IMR-90 (cell line): ENCODE measurements at regions of chr17 and their contacts with region 1.

Region 1: DNA sequence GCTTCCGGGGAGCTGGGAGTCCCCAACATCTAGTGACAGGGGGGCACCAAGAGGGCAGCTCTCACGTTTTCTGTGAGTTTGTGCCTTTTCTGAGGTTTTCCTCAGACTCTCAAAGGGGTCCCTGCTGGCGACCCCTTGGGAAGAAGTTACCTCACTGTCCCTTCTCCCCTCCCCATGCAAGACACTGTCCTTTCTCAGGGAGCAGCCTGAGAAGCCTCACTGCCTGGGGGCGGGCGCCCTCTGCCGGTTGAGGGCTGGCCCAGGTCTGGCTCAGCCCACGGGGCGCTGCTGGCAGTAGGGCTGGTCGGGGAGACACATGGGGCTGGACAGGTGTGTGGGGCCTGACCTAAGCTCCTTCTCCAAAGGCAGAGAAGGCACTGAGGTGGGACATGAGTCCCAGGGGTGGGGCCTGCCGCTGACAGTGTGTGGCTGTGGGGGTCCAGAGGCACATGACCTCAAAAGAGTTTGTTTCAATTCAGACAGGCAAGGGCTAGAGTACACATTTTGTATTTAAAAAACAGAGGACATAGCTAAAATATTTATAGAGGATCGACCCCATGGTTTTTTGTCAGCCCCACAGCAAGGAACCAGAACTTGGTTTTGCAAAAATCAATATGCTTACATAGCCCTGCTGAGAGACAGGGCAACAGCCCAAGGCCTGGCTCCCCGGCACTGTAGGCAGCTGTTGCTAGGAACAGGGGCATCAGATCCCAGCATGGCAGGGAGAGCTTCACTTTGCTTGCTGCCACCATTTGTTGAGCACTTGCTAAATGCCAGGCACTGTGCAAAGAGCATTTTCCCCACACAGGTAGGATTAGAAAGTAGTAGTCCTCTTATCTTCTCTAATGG is 18.5 kb upstream of the ALDH3A1 start:
- DNase-seq: peak; percentile 41
- ATAC-seq: peak; percentile 89
- H3K4me3 ChIP-seq: no peak overlapping the region
- H3K27ac ChIP-seq: no peak overlapping the region
- H3K4me1 ChIP-seq: peaks cover 3% of the 10 kb centered on the region
- H3K27me3 ChIP-seq: peaks cover 13% of the 10 kb centered on the region
- CTCF ChIP-seq: peak; percentile 89
- POLR2A ChIP-seq: no peak
- RAD21 ChIP-seq: peak; percentile 92

Region 2: DNA sequence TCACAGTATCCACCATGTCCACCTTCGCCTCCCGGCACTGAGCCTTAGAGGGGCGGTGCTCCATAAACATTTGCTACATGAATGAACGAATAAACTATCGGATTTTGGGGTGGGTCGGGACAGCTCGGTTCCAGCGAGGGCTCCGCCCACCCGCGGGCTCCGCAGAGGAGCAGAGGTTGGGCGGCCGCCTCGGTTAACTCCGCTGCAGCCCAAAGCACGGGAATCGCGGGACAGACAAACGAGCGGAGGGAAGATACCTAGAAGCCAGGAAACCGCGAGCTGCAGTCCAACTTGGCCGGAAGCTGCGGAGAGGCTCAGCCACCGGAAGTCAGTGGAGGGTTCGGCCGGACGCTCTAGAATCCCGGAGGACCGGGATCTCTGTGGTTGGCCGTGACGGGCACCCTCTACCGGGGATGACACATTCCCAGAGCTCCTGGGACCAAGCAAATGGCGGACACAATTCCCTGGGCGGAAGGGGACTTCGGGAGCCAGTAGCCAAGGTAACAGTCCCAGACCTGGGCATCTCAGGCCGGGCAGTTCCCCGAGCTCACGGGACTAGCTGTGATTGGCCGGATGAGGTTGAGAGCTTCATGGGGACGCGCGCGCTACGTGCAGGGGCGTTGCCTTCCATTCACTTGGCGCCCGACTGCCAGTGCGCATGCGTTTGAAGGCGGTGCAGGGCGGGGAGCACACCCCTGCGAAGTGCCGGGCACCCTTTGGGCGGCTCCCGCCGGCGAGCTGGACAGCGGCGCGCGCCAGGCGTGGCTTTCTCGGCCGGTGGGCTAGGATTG is 388.8 kb before region 1 on chr17:
- CTCF ChIA-PET with region 1: no interaction called
- POLR2A ChIA-PET with region 1: no interaction called
- dilution Hi-C with region 1: no loop called
- in situ Hi-C with region 1: no loop called
- intact Hi-C with region 1: loop called (anchors 5 kb)
- DNase-seq: peak; percentile 99
- ATAC-seq: peak; percentile 95
- H3K4me3 ChIP-seq: peak overlapping the region; percentile 66
- H3K27ac ChIP-seq: peak overlapping the region; percentile 90
- H3K4me1 ChIP-seq: peaks cover 12% of the 10 kb centered on the region; the same call in 1 of the 2 replicates
- H3K27me3 ChIP-seq: no peaks in the 10 kb centered on the region
- CTCF ChIP-seq: no peak
- POLR2A ChIP-seq: peak; percentile 91
- RAD21 ChIP-seq: no peak

Region 3: DNA sequence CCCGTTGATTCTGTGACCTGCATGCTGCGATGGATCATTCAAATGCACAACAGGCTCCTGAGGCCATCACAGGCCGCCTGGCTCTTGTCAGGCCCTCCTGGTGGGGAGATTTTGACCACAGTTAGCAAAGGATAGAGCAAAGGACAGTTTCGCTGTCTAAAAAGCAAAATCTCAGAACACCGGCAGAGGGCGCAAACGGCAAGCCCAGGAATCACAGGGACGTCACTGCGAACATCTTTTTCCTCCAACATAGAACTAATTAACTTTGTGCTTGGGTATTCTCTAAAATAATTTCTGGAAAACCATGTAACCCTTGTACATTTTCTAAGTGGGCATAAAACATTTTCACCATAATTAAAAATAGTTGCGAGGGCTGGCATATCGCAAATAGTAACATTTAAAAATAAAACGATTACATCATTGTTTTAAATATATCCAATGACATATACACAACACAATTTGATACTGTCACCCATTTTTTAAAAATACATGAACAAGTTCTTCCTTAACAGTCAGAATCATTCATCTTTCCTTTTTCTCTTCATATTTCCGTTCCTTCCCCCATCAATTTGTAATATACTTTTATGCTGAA is 252.7 kb before region 1 on chr17:
- CTCF ChIA-PET with region 1: interaction called, 5 read pairs
- POLR2A ChIA-PET with region 1: no interaction called
- dilution Hi-C with region 1: no loop called
- in situ Hi-C with region 1: no loop called
- intact Hi-C with region 1: loop called (anchors 1 kb)
- DNase-seq: peak; percentile 60
- ATAC-seq: peak; percentile 94
- H3K4me3 ChIP-seq: no peak overlapping the region
- H3K27ac ChIP-seq: no peak overlapping the region
- H3K4me1 ChIP-seq: no peaks in the 10 kb centered on the region
- H3K27me3 ChIP-seq: peaks cover 2% of the 10 kb centered on the region
- CTCF ChIP-seq: peak; percentile 93
- POLR2A ChIP-seq: no peak
- RAD21 ChIP-seq: peak; percentile 90

Region 4: GRCh38 chr17:19648475-19649406 is 117.9 kb before region 1 on chr17 and contains the start of gene ALDH3A2:
- CTCF ChIA-PET with region 1: interaction called, 15 read pairs
- POLR2A ChIA-PET with region 1: no interaction called
- dilution Hi-C with region 1: no loop called
- in situ Hi-C with region 1: no loop called
- intact Hi-C with region 1: loop called (anchors 2 kb)
- DNase-seq: peak; percentile 79
- ATAC-seq: peak; percentile 96
- H3K4me3 ChIP-seq: peak within 1 kb of the TSS; percentile 72
- H3K27ac ChIP-seq: peak within 1 kb of the TSS; percentile 64
- H3K4me1 ChIP-seq: peaks cover 8% of the 10 kb centered on the region
- H3K27me3 ChIP-seq: peaks cover 26% of the 10 kb centered on the region
- CTCF ChIP-seq: no peak
- POLR2A ChIP-seq: peak; percentile 52; the same call in 1 of the 2 replicates
- RAD21 ChIP-seq: no peak
- total RNA-seq, gene ALDH3A2: 6.9 and 7.9 TPM in 2 replicates

Region 5: GRCh38 chr17:20085283-20085845 is 318.7 kb after region 1 on chr17:
- CTCF ChIA-PET with region 1: no interaction called
- POLR2A ChIA-PET with region 1: no interaction called
- dilution Hi-C with region 1: no loop called
- in situ Hi-C with region 1: no loop called
- intact Hi-C with region 1: no loop called
- DNase-seq: no peak
- ATAC-seq: no peak
- H3K4me3 ChIP-seq: no peak overlapping the region
- H3K27ac ChIP-seq: no peak overlapping the region
- H3K4me1 ChIP-seq: peaks cover 3% of the 10 kb centered on the region; the same call in 1 of the 2 replicates
- H3K27me3 ChIP-seq: peaks cover 30% of the 10 kb centered on the region
- CTCF ChIP-seq: no peak
- POLR2A ChIP-seq: no peak
- RAD21 ChIP-seq: no peak